GM12878 (cell line): ENCODE measurements at regions of chr9 and their contacts with region 1.

Region 1: DNA sequence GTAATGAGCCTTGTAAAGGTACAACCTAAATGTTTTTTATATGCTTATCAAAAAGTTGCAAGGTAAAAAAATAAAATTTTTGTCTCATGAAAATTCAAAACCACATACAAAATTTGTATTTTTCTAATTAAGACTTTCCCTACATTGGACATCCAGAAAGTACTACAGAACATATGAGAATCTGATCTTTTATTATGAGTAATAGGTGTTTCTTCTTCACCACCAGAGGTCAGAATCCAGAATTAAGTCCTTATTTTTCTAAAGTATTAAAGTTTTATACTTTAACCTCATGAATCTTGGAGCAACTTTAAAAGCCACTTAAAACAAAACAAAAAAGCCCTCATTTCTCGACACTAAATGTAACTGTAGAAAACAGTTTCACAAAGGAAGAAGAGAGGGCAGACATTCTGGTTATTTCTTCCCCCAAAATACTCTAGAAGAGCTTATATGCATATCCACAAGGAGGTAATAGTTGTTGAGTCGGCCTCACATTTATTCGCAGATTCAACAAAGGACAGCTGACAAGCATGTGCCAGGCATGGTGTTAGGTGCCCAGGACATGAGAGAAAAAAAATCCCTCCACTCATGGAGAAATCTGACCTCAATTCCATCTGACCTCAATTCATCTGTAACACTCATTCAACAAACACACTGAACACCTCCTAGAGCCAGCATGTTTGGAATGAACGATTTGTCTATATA is 69.3 kb downstream of the MLLT3 start:
- DNase-seq: peak; percentile 38
- ATAC-seq: peak; percentile 67
- H3K4me3 ChIP-seq: peak overlapping the region; percentile 8
- H3K27ac ChIP-seq: peak overlapping the region; percentile 66
- H3K4me1 ChIP-seq: peaks cover 36% of the 10 kb centered on the region
- H3K27me3 ChIP-seq: no peaks in the 10 kb centered on the region
- CTCF ChIP-seq: peak in 1 of 3 experiments; percentile 8; a peak in 2 of 6 replicates
- EP300 ChIP-seq: no peak
- POLR2A ChIP-seq: no peak
- RAD21 ChIP-seq: 0 out of 2 replicates have a peak, but pooled peaks have one; percentile 2

Region 2: DNA sequence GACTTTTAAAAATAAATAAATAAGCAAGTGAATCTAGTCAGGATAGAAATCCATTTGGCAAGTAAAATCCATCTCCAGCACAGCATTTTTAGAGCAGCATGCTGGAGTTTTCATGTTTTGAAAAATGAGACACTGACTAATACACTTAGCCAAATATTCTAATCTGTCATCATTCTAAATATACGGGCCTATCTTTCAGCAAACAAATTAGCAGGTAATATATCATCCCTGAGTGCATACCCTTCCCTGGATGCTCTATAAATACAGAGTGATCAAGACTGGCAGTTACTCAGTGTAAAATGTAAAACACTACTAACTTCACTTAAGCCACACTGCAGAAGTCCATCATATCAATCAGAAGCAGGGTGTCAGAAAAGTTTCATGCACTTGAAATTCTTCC is 10.9 kb after region 1 on chr9:
- CTCF ChIA-PET with region 1: interaction called, 4 read pairs
- POLR2A ChIA-PET with region 1: interaction called, 3 read pairs
- RAD21 ChIA-PET with region 1: interaction called, 11 read pairs
- SMC1A ChIA-PET with region 1: interaction called, 13 read pairs
- in situ Hi-C with region 1: no loop called
- intact Hi-C with region 1: no loop called
- DNase-seq: no peak
- ATAC-seq: 0 out of 3 replicates have a peak, but pooled peaks have one; percentile 10
- H3K4me3 ChIP-seq: no peak overlapping the region
- H3K27ac ChIP-seq: no peak overlapping the region
- H3K4me1 ChIP-seq: peaks cover 11% of the 10 kb centered on the region
- H3K27me3 ChIP-seq: no peaks in the 10 kb centered on the region
- CTCF ChIP-seq: no peak
- EP300 ChIP-seq: no peak
- POLR2A ChIP-seq: no peak
- RAD21 ChIP-seq: no peak

Region 3: GRCh38 chr9:20570756-20571155 is 17.7 kb after region 1 on chr9:
- CTCF ChIA-PET with region 1: interaction called, 6 read pairs
- POLR2A ChIA-PET with region 1: interaction called, 3 read pairs
- RAD21 ChIA-PET with region 1: interaction called, 3 read pairs
- SMC1A ChIA-PET with region 1: interaction called, 15 read pairs
- in situ Hi-C with region 1: no loop called
- intact Hi-C with region 1: no loop called
- DNase-seq: no peak
- ATAC-seq: peak; percentile 82
- H3K4me3 ChIP-seq: no peak overlapping the region
- H3K27ac ChIP-seq: peak overlapping the region; percentile 15
- H3K4me1 ChIP-seq: peaks cover 16% of the 10 kb centered on the region
- H3K27me3 ChIP-seq: no peaks in the 10 kb centered on the region
- CTCF ChIP-seq: no peak
- EP300 ChIP-seq: no peak
- POLR2A ChIP-seq: no peak
- RAD21 ChIP-seq: no peak

Region 4: GRCh38 chr9:20611751-20612287 is 58.8 kb after region 1 on chr9:
- CTCF ChIA-PET with region 1: interaction called, 32 read pairs
- POLR2A ChIA-PET with region 1: no interaction called
- RAD21 ChIA-PET with region 1: interaction called, 33 read pairs
- SMC1A ChIA-PET with region 1: interaction called, 52 read pairs
- in situ Hi-C with region 1: no loop called
- intact Hi-C with region 1: no loop called
- DNase-seq: no peak
- ATAC-seq: peak; percentile 75
- H3K4me3 ChIP-seq: no peak overlapping the region; the same call in 1 of the 2 replicates
- H3K27ac ChIP-seq: no peak overlapping the region
- H3K4me1 ChIP-seq: no peaks in the 10 kb centered on the region; the same call in 1 of the 2 replicates
- H3K27me3 ChIP-seq: no peaks in the 10 kb centered on the region
- CTCF ChIP-seq: peak in 2 of 3 experiments; percentile 36 to 39; a peak in 3 of 6 replicates
- EP300 ChIP-seq: no peak
- POLR2A ChIP-seq: no peak
- RAD21 ChIP-seq: 0 out of 2 replicates have a peak, but pooled peaks have one; percentile 20

Region 5: GRCh38 chr9:20805766-20806165 is 252.7 kb after region 1 on chr9:
- CTCF ChIA-PET with region 1: no interaction called
- POLR2A ChIA-PET with region 1: no interaction called
- RAD21 ChIA-PET with region 1: no interaction called
- SMC1A ChIA-PET with region 1: no interaction called
- in situ Hi-C with region 1: no loop called
- intact Hi-C with region 1: no loop called
- DNase-seq: no peak
- ATAC-seq: no peak
- H3K4me3 ChIP-seq: no peak overlapping the region
- H3K27ac ChIP-seq: no peak overlapping the region
- H3K4me1 ChIP-seq: no peaks in the 10 kb centered on the region
- H3K27me3 ChIP-seq: no peaks in the 10 kb centered on the region
- CTCF ChIP-seq: no peak
- EP300 ChIP-seq: no peak
- POLR2A ChIP-seq: no peak
- RAD21 ChIP-seq: no peak